ENCODE measurements at regions of chr11 and their contacts with region 1.

Region 1: GRCh38 chr11:61928606-61929005 is 11.2 kb upstream of the RAB3IL1 start:
- DNase-seq: no peak
- H3K4me3 ChIP-seq: no peak overlapping the region
- H3K27ac ChIP-seq: no peak overlapping the region
- H3K4me1 ChIP-seq: no peaks in the 10 kb centered on the region
- H3K27me3 ChIP-seq: peaks cover 13 to 14% of the 10 kb centered on the region in 2 experiments
- CTCF ChIP-seq: no peak
- POLR2A ChIP-seq: no peak

Region 2: GRCh38 chr11:61871158-61871597 is 57.4 kb before region 1 on chr11:
- CTCF ChIA-PET with region 1: no interaction called
- POLR2A ChIA-PET with region 1: no interaction called
- dilution Hi-C with region 1: no loop called
- intact Hi-C with region 1: no loop called
- DNase-seq: peak; percentile 76
- H3K4me3 ChIP-seq: no peak overlapping the region
- H3K27ac ChIP-seq: no peak overlapping the region
- H3K4me1 ChIP-seq: peaks cover 12% of the 10 kb centered on the region
- H3K27me3 ChIP-seq: no peaks in the 10 kb centered on the region
- CTCF ChIP-seq: peak; percentile 95 to 99
- POLR2A ChIP-seq: no peak

Region 3: GRCh38 chr11:62295504-62295903 is 366.9 kb after region 1 on chr11:
- CTCF ChIA-PET with region 1: no interaction called
- POLR2A ChIA-PET with region 1: no interaction called
- dilution Hi-C with region 1: no loop called
- intact Hi-C with region 1: loop called (anchors 5 kb)
- DNase-seq: peak; percentile 45
- H3K4me3 ChIP-seq: no peak overlapping the region
- H3K27ac ChIP-seq: no peak overlapping the region
- H3K4me1 ChIP-seq: no peaks in the 10 kb centered on the region
- H3K27me3 ChIP-seq: peaks cover 9 to 10% of the 10 kb centered on the region in 2 experiments
- CTCF ChIP-seq: no peak
- POLR2A ChIP-seq: no peak

Measured in endothelial cell of umbilical vein (primary cell).